Caki2 (cell line): ENCODE measurements at regions of chr5 and their contacts with region 1.

Region 1: DNA sequence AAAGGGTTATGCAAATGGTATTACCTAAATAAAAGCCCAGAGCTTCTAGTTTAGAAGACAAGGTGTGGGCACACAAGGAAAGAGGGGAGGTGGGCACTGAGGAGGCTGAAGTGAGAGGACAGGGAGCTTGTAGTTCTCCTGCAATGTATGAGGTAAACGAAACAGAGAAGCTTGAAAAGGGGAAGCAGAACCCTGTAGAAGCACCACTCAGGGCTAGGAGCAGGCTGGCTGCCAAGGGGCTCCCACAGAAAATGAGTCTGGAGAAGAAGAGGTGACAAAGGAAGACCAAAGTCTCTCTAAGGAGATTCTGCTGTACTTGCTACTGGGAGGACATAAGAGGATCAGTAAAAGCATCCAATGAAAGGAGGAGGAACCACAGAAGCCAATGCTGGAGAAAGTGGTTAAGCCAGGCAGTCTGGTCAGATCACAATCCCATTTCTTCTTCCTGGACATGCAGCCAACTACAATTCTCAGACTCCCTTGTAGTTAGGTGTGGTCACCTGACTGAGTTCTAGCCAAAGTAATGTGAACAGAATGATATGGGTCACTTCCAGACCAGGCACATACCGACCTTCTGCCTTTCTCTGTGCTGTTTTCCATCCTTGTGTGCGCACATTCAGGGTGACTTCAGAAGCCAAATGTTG is 174.5 kb upstream of the MAP3K1 start:
- DNase-seq: peak; percentile 35

Region 2: DNA sequence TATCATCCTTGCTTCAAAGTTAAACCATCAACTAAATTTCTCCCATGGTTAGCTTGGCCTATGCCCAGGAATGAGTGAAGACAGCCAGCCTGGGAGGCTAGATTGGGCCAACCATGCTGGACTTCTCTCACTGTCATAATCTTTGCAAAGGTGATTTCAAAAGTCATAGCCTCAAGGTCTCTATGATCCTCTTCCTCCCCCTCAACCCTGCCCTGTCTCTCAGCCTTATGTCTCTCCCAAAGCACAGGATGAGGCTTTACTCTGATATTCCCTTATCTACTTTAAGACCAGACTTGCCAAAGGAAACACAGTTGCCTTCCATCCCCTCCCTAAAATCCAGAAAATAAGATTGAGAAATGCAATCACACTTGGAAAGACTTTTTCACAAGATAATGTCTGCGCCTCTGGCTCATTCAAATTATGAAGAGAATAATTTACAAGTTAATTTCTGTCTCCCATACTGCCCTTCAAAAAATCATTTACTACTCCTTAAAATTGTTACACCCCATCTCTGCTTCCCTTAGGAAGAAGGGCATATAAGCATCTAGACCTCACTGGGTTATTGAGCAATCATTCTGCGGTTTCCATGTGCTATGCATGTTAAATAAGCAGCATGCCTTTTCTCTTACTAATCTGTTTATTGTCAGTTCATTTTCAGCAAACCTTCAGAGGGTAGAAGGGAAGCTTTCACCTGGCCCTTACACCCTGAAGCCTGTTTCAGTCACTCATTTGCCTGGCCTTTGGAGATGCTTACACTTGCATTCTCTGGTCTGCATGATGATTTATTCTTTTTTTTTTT is 293.9 kb before region 1 on chr5:
- in situ Hi-C with region 1: no loop called
- DNase-seq: peak; percentile 93

Region 3: GRCh38 chr5:57267805-57268204 is 626.9 kb after region 1 on chr5:
- in situ Hi-C with region 1: loop called (anchors 10 kb)
- DNase-seq: no peak